H1 (cell line): ENCODE measurements at regions of chr17 and their contacts with region 1.

Region 1: DNA sequence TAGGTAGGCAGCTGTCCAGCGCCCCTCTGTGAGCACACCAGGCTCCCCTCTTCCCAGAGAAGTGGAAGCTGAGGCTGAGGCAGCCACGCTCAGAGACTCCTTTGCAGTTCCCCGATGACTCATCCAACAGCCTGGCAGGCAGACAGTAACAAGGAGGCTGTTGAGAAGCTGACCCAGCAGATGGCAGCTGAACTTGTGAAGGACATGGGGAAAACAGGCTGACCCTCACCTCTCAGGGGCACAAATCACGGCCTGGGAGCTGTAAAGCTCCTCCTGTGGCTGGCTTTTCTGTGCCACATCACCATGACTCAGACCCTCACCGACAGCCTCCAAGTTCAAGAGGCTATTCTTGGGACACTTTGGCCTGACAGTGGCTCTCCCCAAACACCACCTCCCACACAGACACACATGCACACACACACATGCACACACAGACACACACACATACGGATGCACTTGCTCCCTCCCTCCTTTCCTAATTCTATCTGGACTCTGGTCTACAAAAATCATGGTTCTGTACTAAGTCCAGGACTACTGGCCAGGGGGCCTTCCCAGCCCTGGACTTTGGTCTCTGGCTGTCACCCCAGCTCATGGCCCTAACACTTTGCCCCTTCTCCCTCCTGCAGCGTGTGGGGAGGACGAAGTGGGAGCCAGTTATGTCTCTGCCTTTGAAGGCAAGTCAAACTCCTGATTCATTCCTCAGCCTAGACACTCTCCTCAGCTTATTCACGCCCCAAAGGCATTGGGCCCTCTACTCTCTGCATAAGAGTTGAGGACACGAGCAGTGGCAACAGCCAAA is 23.2 kb downstream of the MAP3K14 start:
- DNase-seq: no peak
- H3K4me3 ChIP-seq: no peak overlapping the region
- H3K27ac ChIP-seq: no peak overlapping the region
- H3K4me1 ChIP-seq: peaks cover 0 to 5% (median 0%) of the 10 kb centered on the region in 4 experiments; a peak in 1 of 7 replicates
- H3K27me3 ChIP-seq: no peaks in the 10 kb centered on the region
- CTCF ChIP-seq: peak in 1 of 3 experiments; percentile 16; a peak in 1 of 4 replicates
- EP300 ChIP-seq: no peak
- POLR2A ChIP-seq: no peak
- RAD21 ChIP-seq: no peak; a peak in 1 of 4 replicates

Region 2: GRCh38 chr17:45307290-45308015 is 13.8 kb after region 1 on chr17:
- CTCF ChIA-PET with region 1: interaction called, 14 read pairs
- POLR2A ChIA-PET with region 1: interaction called, 3 read pairs
- DNase-seq: no peak
- H3K4me3 ChIP-seq: no peak overlapping the region
- H3K27ac ChIP-seq: no peak overlapping the region
- H3K4me1 ChIP-seq: peaks cover 0 to 3% (median 2%) of the 10 kb centered on the region in 4 experiments
- H3K27me3 ChIP-seq: no peaks in the 10 kb centered on the region; a peak in 1 of 7 replicates
- CTCF ChIP-seq: no peak
- EP300 ChIP-seq: no peak
- POLR2A ChIP-seq: no peak
- RAD21 ChIP-seq: no peak